ENCODE measurements at regions of chr9 and their contacts with region 1.

Region 1: DNA sequence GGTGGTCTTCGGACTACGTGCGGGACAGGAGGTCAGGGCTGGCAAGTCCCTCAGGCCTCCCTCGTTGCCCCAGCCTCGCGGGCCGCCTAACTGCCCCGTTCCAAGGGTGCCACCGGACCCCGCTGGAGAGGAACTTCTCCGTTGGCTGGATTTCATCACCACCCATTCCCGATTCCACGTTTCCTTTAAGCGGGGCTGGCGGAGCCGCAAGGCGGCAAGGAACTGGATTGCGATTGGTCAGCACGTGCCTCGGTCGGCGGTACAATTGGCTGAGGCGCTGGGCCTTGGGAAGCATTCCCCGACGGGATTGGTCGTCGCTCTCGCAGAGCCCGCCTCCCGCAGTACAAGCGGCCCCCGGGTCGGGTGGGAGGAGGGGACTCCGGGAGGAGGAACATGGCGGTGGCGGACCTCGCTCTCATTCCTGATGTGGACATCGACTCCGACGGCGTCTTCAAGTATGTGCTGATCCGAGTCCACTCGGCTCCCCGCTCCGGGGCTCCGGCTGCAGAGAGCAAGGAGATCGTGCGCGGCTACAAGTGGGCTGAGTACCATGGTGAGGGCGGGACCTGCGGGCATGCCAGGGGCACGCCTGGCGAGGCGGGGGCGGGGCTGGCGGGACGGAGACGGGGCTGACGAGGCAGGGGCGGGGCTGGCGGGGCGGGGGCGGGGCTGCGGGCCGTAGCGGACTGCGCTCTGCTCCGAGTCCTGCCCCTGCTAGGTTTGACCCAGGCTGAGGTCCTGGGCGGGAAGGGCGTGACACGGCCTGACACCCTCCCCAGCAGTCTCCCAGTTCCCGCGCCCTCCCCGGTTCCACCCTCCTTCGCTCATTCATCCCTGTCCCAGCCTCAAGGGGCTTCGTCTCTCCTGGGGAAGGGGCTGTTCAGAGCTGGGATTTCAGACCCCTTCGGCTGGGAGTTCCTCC is at the start of gene PHPT1:
- DNase-seq: peak; percentile 98 to 100 (median 99)

Region 2: DNA sequence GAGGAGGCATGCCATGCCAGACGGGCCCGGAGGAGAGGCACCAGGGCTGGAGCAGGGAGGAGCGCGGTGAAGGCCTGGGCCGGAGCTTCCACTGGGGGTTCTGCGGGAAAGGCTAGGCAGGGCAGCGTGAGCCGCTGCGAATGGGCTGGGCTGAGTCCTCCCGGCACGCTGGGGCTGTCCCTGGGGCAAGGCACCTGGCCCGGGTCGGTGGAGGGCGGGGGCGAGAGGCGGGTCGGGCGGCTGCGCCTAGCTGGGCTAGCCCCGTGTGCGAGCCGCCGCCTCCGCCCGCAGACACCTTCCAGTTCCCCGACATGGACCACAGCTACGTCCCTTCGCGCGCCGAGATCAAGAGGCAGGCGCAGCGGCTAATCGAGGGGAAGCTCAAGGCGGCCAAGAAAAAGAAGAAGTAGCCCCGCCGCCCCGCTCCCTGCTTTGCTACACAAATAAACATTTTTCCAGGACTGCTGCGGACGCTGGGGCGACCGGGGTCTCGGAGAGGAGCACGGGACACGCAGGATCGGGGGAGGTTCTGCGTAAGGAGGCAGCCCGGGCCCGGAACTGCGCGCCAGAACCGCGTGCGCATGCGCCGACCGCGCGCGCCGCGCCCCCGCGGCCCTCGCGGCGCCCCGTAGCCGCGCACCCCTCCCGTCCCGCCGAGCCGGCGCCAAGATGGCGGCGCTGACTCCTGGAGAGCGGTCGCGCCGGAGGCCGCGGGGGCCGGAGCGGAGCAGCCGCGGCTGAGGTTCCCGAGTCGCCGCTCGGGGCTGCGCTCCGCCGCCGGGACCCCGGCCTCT is 41.8 kb before region 1 on chr9 and contains the start of gene RABL6:
- intact Hi-C with region 1: loop called (anchors 5 kb)
- DNase-seq: peak; percentile 16 to 89 (median 76)

Measured in head of caudate nucleus (tissue), 42 donors.